ENCODE measurements at regions of chr1 and their contacts with region 1.

Region 1: GRCh38 chr1:201042779-201043461 is 19.4 kb upstream of the KIF21B start:
- DNase-seq: peak in 9 of 10 donors; percentile 49 to 95 (median 74)

Region 2: GRCh38 chr1:200558866-200559459 is 484.0 kb before region 1 on chr1:
- intact Hi-C with region 1: loop called (anchors 5 kb)
- DNase-seq: no peak

Region 3: GRCh38 chr1:200971955-200972711 is 70.8 kb before region 1 on chr1:
- intact Hi-C with region 1: loop called (anchors 1 kb)
- DNase-seq: peak; percentile 65 to 96 (median 78)

Region 4: GRCh38 chr1:201053158-201053860 is 10.4 kb after region 1 on chr1:
- intact Hi-C with region 1: no loop called
- DNase-seq: no peak

Region 5: GRCh38 chr1:201114236-201115131 is 71.6 kb after region 1 on chr1:
- intact Hi-C with region 1: loop called (anchors 10 kb)
- DNase-seq: peak; percentile 82 to 98 (median 91)

Measured in posterior cingulate gyrus (tissue), 11 donors.